ENCODE measurements at regions of chr20 and their contacts with region 1.

Region 1: GRCh38 chr20:1266167-1266973 is at the start of gene SNPH:
- DNase-seq: peak; percentile 78
- H3K4me3 ChIP-seq: peak within 1 kb of the TSS; percentile 58 to 76 (median 60)
- H3K27ac ChIP-seq: no peak within 1 kb of the TSS
- H3K4me1 ChIP-seq: peaks cover 8% of the 10 kb centered on the region
- H3K27me3 ChIP-seq: no peaks in the 10 kb centered on the region
- CTCF ChIP-seq: no peak
- POLR2A ChIP-seq: no peak
- total RNA-seq, gene SNPH: 5.1 and 5.5 TPM in 2 replicates

Region 2: DNA sequence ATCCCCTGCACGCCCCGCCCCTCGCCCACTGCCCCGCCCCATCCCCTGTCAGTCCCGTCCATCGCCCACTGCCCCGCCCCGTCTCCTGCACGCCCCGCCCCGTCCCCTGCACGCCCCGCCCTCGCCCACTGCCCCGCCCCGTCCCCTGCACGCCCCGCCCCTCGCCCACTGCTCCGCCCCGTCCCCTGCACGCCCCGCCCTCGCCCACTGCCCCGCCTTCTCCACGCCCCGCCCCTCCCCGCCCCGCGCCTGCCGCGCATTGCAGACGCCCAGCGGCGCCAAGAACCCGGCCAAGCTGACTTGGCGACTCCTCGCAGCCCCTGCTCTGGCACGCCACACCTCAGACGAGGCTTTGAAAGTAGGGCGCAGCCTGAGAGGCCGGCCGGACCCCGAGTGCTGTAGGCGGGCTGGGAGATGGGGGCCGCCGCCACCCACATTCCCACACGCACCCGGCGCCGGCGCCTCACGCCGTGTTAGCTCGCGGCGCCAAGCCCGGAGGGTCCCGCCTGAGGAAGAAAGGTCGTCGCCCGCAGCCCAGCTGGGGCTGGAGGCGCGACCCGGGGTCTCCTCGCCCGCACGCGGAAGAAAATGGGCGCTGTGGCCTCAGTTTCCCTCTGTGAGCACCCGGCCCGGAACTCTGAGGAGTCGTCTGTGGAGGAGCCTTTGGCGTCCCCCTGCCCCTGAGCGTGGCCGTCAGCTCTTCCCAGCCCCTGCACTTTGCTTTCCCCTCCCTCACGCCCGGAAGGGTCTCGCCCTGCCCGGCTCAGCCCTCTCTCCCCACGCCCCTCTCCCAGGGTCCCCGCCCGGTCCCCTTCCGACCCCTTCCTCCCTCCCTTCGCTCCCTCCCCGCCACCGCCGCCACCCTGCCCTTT is 40.4 kb before region 1 on chr20 and contains the start of gene RAD21L1:
- CTCF ChIA-PET with region 1: no interaction called
- POLR2A ChIA-PET with region 1: no interaction called
- dilution Hi-C with region 1: no loop called
- intact Hi-C with region 1: loop called (anchors 5 kb)
- DNase-seq: peak; percentile 50
- H3K4me3 ChIP-seq: peak within 1 kb of the TSS; percentile 70 to 90 (median 71)
- H3K27ac ChIP-seq: peak within 1 kb of the TSS; percentile 70
- H3K4me1 ChIP-seq: peaks cover 6% of the 10 kb centered on the region
- H3K27me3 ChIP-seq: peaks cover 0 to 23% of the 10 kb centered on the region in 2 experiments
- CTCF ChIP-seq: no peak
- POLR2A ChIP-seq: no peak
- total RNA-seq, gene RAD21L1: not detected in 2 replicates

Region 3: GRCh38 chr20:1242530-1242929 is 23.8 kb before region 1 on chr20:
- CTCF ChIA-PET with region 1: interaction called, 9 read pairs
- POLR2A ChIA-PET with region 1: no interaction called
- dilution Hi-C with region 1: no loop called
- intact Hi-C with region 1: loop called (anchors 1 kb)
- DNase-seq: peak; percentile 80
- H3K4me3 ChIP-seq: no peak overlapping the region
- H3K27ac ChIP-seq: peak overlapping the region; percentile 24
- H3K4me1 ChIP-seq: peaks cover 24% of the 10 kb centered on the region
- H3K27me3 ChIP-seq: no peaks in the 10 kb centered on the region
- CTCF ChIP-seq: no peak
- POLR2A ChIP-seq: no peak